CD8-positive, alpha-beta T cell (primary cell): ENCODE measurements at regions of chr2 and their contacts with region 1.

Region 1: DNA sequence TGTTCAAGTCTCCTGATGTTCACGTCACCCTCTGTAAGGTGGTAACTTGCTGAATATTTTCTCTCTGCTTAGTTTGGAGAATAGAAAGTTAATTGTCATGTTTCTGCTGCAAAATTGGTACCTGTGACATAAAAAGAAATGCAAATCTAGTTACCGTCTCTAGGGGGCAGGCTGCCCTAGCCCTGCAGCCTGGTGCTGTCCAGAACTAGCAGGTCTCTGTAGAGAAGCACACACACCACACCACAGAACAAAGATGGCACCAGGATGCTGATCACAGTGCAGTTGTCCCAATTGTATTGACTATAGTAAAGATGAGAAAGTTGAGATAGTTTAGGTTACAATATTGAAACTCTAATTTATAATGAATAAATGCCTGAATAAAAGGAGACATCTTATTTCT is 47.0 kb downstream of the SLC9A4 start:
- DNase-seq: peak in 2 of 9 experiments; percentile 46 to 52
- ATAC-seq: no peak
- H3K4me3 ChIP-seq: no peak overlapping the region
- H3K4me3 Mint-ChIP-seq: no peak overlapping the region
- H3K27ac ChIP-seq: no peak overlapping the region
- H3K27ac Mint-ChIP-seq: no peak overlapping the region
- H3K4me1 ChIP-seq: no peaks in the 10 kb centered on the region
- H3K4me1 Mint-ChIP-seq: no peaks in the 10 kb centered on the region
- H3K27me3 ChIP-seq: no peaks in the 10 kb centered on the region
- H3K27me3 Mint-ChIP-seq: no peaks in the 10 kb centered on the region
- CTCF ChIP-seq: no peak

Region 2: DNA sequence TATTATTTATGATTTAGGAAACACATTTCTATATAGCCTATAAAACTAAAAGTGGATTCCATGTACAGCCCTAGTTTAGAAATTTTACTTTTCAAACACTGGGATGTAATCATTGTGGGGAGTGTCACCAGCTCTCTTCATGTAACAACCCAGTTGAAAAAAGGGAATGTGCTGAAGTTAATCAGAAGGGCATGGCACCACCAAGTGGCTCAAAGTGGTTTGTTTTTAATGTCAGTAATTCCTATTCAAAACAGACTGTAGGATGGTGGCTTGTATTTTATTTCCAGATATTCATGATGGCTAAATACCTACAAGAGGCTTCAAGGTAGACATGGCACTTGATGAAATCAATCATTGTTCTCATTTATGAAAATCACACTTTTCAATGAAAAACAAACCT is 183.7 kb after region 1 on chr2:
- CTCF ChIA-PET with region 1: no interaction called
- POLR2A ChIA-PET with region 1: no interaction called
- intact Hi-C with region 1: loop called in 1 of 2 experiments (anchors 2 kb)
- DNase-seq: peak in 2 of 9 experiments; percentile 12 to 28
- ATAC-seq: no peak
- H3K4me3 ChIP-seq: no peak overlapping the region
- H3K4me3 Mint-ChIP-seq: no peak overlapping the region
- H3K27ac ChIP-seq: no peak overlapping the region
- H3K27ac Mint-ChIP-seq: no peak overlapping the region
- H3K4me1 ChIP-seq: no peaks in the 10 kb centered on the region
- H3K4me1 Mint-ChIP-seq: no peaks in the 10 kb centered on the region
- H3K27me3 ChIP-seq: no peaks in the 10 kb centered on the region
- H3K27me3 Mint-ChIP-seq: peaks cover 8% of the 10 kb centered on the region
- CTCF ChIP-seq: no peak

Region 3: GRCh38 chr2:102806250-102806837 is 286.3 kb after region 1 on chr2:
- CTCF ChIA-PET with region 1: no interaction called
- POLR2A ChIA-PET with region 1: no interaction called
- intact Hi-C with region 1: loop called in 1 of 2 experiments (anchors 5 kb)
- DNase-seq: peak in 5 of 9 experiments; percentile 8 to 39 (median 22)
- ATAC-seq: no peak
- H3K4me3 ChIP-seq: no peak overlapping the region
- H3K4me3 Mint-ChIP-seq: no peak overlapping the region
- H3K27ac ChIP-seq: no peak overlapping the region
- H3K27ac Mint-ChIP-seq: no peak overlapping the region
- H3K4me1 ChIP-seq: peaks cover 14% of the 10 kb centered on the region
- H3K4me1 Mint-ChIP-seq: peaks cover 15% of the 10 kb centered on the region
- H3K27me3 ChIP-seq: no peaks in the 10 kb centered on the region
- H3K27me3 Mint-ChIP-seq: no peaks in the 10 kb centered on the region
- CTCF ChIP-seq: peak; percentile 48